K562 (cell line): ENCODE measurements at regions of chr2 and their contacts with region 1.

Region 1: DNA sequence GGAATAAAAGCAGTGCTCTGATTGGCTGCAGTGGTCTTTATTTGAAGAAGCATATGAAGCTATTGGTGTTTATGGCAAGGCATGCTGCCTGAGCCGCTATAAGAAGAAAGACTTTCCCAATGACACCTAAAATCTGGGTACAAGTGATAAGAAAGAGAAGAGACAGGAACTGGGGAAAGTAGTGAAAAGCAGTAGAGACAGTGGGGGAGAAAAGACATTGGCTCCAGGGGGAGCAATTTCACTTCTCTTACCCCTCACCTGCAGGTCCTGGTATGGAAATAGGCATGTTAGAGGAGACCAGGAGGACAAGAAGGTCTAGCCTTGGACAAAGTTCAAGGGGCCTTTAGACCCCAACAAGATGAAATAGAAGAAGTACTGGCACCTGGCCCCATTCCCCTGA is 47.1 kb downstream of the PLCL1 start:
- DNase-seq: peak; percentile 31 to 72 (median 54)
- ATAC-seq: peak; percentile 89
- H3K4me3 ChIP-seq: no peak overlapping the region
- H3K27ac ChIP-seq: peak overlapping the region; percentile 20; the same call in 1 of the 3 replicates
- H3K4me1 ChIP-seq: peaks cover 0 to 30% of the 10 kb centered on the region in 2 experiments; a peak in 3 of 5 replicates
- H3K27me3 ChIP-seq: no peaks in the 10 kb centered on the region
- CTCF ChIP-seq: peak; percentile 43 to 64 (median 51)
- EP300 ChIP-seq: peak; percentile 40; the same call in 1 of the 2 replicates
- POLR2A ChIP-seq: no peak
- RAD21 ChIP-seq: peak; percentile 56 to 85

Region 2: GRCh38 chr2:197828464-197829135 is 22.9 kb before region 1 on chr2:
- CTCF ChIA-PET with region 1: no interaction called
- POLR2A ChIA-PET with region 1: no interaction called
- in situ Hi-C with region 1: no loop called
- intact Hi-C with region 1: no loop called
- DNase-seq: no peak
- ATAC-seq: no peak
- H3K4me3 ChIP-seq: no peak overlapping the region
- H3K27ac ChIP-seq: no peak overlapping the region
- H3K4me1 ChIP-seq: no peaks in the 10 kb centered on the region; a peak in 1 of 5 replicates
- H3K27me3 ChIP-seq: no peaks in the 10 kb centered on the region
- CTCF ChIP-seq: no peak
- EP300 ChIP-seq: no peak
- POLR2A ChIP-seq: no peak
- RAD21 ChIP-seq: no peak

Region 3: DNA sequence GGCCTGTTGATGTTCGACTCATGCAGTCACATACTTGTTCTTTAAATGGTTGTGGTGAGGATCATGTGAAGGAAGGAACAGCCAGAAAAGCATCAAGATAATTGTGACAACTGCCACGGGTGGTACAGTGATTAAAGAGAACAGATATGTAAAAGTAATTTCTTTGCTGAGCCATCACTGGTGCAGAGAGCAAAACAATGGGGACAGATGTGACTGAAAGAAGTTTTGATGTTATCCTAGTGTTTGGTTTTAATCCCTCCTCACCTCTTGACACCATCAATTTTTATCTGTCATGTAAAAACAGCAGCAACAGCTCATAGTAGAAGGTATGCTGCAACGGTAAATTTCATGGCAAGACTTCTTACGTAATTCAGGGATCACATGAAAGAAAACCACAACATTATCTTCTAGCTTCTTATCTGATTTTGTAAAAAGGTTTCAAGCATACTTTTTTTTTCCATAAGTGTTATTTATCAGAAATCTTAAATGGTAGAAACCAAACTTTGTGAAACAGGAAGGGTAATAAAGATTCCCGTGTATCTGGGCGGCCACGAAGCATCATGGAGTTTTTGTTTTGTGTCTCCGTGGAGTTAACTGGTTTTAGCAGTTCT is 18.2 kb after region 1 on chr2:
- CTCF ChIA-PET with region 1: no interaction called
- POLR2A ChIA-PET with region 1: no interaction called
- in situ Hi-C with region 1: no loop called
- intact Hi-C with region 1: no loop called
- DNase-seq: peak in 1 of 4 experiments; percentile 42
- ATAC-seq: peak; percentile 13; the same call in 2 of the 3 replicates
- H3K4me3 ChIP-seq: no peak overlapping the region
- H3K27ac ChIP-seq: peak overlapping the region; percentile 55; the same call in 1 of the 3 replicates
- H3K4me1 ChIP-seq: peaks cover 10 to 49% of the 10 kb centered on the region in 2 experiments
- H3K27me3 ChIP-seq: no peaks in the 10 kb centered on the region
- CTCF ChIP-seq: no peak
- EP300 ChIP-seq: peak; percentile 67
- POLR2A ChIP-seq: no peak
- RAD21 ChIP-seq: no peak

Region 4: DNA sequence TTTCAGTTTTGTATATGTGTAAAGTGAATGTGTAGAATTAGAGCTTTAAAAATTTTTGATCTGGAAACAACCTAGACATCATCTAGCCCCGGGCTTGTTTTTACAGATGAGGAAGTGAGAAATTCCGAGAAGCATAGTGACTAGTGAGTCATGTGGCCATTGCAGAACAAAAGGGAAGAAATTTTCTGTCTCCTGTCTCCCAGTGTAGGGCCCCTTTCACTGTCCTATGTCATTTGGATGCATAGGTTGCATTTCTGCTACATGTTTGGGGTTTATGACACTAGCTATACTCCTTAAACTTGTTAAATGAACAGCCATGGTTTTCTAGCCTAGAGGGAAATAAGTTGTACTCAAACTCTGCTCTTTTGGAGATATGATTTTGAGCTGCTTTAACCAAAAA is 37.6 kb after region 1 on chr2:
- CTCF ChIA-PET with region 1: no interaction called
- POLR2A ChIA-PET with region 1: interaction called, 3 read pairs
- in situ Hi-C with region 1: no loop called
- intact Hi-C with region 1: loop called (anchors 1 kb)
- DNase-seq: peak in 3 of 4 experiments; percentile 21 to 77 (median 50)
- ATAC-seq: peak; percentile 79
- H3K4me3 ChIP-seq: no peak overlapping the region
- H3K27ac ChIP-seq: peak overlapping the region; percentile 84
- H3K4me1 ChIP-seq: peaks cover 4 to 37% of the 10 kb centered on the region in 2 experiments; a peak in 3 of 5 replicates
- H3K27me3 ChIP-seq: no peaks in the 10 kb centered on the region
- CTCF ChIP-seq: no peak
- EP300 ChIP-seq: peak; percentile 49; the same call in 1 of the 2 replicates
- POLR2A ChIP-seq: 0 out of 2 replicates have a peak, but pooled peaks have one; percentile 29
- RAD21 ChIP-seq: no peak

Region 5: DNA sequence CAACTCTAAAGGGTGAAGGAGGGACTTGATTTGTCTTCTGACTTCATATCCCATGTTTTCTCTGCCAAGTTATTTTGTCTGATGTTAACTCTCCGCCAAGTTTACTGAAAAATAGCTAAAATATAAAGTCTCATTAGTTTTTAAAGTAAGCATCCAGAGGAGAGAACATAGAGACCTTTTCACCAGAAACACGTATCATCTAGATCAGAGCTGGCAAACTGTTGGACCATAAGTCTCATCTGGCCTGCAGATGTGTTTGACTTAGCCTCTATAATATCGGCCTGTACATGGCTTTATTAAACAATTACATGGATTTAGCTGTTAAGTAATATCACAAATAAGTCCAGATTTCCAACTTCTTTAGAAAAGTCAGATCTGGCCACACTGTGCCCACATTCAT is 135.5 kb after region 1 on chr2:
- CTCF ChIA-PET with region 1: no interaction called
- POLR2A ChIA-PET with region 1: no interaction called
- in situ Hi-C with region 1: no loop called
- intact Hi-C with region 1: loop called (anchors 5 kb)
- DNase-seq: no peak
- ATAC-seq: no peak
- H3K4me3 ChIP-seq: no peak overlapping the region
- H3K27ac ChIP-seq: no peak overlapping the region
- H3K4me1 ChIP-seq: peaks cover 0 to 15% of the 10 kb centered on the region in 2 experiments; a peak in 2 of 5 replicates
- H3K27me3 ChIP-seq: no peaks in the 10 kb centered on the region
- CTCF ChIP-seq: no peak
- EP300 ChIP-seq: no peak
- POLR2A ChIP-seq: no peak
- RAD21 ChIP-seq: no peak

Region 6: DNA sequence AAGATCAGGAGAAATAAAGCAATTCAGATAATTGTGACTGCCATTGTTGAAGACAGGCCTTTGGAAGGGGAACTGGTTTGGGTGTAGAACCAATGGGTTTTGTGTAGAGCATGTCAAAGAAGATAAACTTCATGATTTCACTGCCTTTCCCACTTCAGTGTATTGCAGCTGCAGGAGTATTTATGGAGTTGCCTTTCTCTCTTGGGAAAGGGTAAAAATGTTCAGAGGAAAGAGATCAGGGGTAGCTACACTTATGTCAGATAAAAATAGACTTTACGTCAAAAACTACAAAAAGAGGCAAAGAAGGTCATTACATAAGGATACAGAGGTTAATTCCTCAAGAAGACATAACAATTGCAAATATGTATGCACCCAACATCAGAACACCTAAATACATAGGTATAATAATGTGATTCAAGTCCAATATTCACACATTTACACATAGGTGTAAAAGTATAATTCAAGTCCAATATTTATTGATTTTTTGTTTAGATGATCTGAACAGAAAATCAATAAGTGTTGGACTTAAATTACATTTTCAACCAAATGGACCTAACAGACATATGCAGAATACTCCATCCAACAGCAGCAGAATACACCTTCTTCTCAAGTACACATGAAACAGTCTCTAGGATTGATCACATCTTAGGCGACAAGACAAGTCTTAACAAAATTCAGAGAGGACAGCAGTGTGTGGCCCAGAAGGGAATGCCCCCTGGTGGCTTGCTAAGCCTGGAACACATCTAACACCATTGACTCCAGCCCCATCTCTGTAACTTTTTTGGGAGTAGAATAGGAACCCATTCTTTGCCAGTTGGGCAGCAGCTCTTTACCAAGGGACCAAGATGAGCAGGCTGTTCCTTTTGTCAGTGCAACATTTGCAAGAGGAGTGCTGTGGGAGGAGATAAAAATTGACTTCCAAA is 202.6 kb after region 1 on chr2:
- CTCF ChIA-PET with region 1: interaction called, 3 read pairs
- POLR2A ChIA-PET with region 1: no interaction called
- in situ Hi-C with region 1: no loop called
- intact Hi-C with region 1: loop called (anchors 2 kb)
- DNase-seq: peak; percentile 21 to 72 (median 48)
- ATAC-seq: peak; percentile 96
- H3K4me3 ChIP-seq: no peak overlapping the region
- H3K27ac ChIP-seq: no peak overlapping the region
- H3K4me1 ChIP-seq: peaks cover 3 to 8% of the 10 kb centered on the region in 2 experiments; a peak in 4 of 5 replicates
- H3K27me3 ChIP-seq: no peaks in the 10 kb centered on the region
- CTCF ChIP-seq: peak; percentile 59 to 66 (median 61)
- EP300 ChIP-seq: no peak
- POLR2A ChIP-seq: no peak
- RAD21 ChIP-seq: peak; percentile 62 to 76

Region 7: GRCh38 chr2:198127627-198128026 is 276.2 kb after region 1 on chr2:
- CTCF ChIA-PET with region 1: interaction called, 4 read pairs
- POLR2A ChIA-PET with region 1: no interaction called
- in situ Hi-C with region 1: no loop called
- intact Hi-C with region 1: loop called (anchors 1 kb)
- DNase-seq: peak; percentile 28 to 72 (median 46)
- ATAC-seq: peak; percentile 87
- H3K4me3 ChIP-seq: no peak overlapping the region
- H3K27ac ChIP-seq: no peak overlapping the region
- H3K4me1 ChIP-seq: peaks cover 0 to 3% of the 10 kb centered on the region in 2 experiments; a peak in 2 of 5 replicates
- H3K27me3 ChIP-seq: no peaks in the 10 kb centered on the region
- CTCF ChIP-seq: peak; percentile 52 to 60 (median 53)
- EP300 ChIP-seq: no peak
- POLR2A ChIP-seq: no peak
- RAD21 ChIP-seq: peak; percentile 42 to 75

Region 8: DNA sequence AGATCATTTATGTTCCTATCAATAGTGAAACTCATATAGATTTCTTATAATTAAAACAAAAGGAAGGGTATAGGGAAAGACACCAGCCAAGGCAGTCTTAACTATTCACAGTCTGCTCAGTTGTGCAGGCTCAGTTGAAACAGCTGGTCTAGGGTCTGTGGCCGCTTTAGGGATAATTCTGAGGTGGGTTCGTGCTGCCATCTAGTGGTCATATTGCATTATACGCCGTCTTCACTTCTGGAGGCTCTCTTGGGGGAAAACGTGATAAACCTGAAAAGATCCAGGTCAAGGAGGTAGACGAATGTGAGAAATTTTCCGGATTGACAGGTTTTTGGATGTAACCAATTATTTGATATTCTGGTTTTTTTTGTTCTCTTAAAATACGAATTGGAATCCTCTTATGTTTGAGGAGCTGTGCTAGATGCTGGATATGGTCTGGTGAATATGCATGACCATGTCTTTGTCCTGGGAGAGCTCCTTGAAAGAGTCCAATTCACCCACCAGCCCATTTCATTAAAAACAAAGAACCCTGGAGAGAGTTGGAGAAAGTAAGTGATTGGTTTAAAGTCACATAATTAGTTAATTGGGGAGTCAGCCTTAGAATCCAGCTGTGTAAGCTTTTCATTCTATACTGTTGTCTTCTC is 445.3 kb after region 1 on chr2:
- CTCF ChIA-PET with region 1: no interaction called
- POLR2A ChIA-PET with region 1: no interaction called
- in situ Hi-C with region 1: no loop called
- intact Hi-C with region 1: loop called (anchors 2 kb)
- DNase-seq: peak; percentile 53 to 76 (median 60)
- ATAC-seq: peak; percentile 96
- H3K4me3 ChIP-seq: no peak overlapping the region
- H3K27ac ChIP-seq: no peak overlapping the region
- H3K4me1 ChIP-seq: peaks cover 0 to 3% of the 10 kb centered on the region in 2 experiments; a peak in 2 of 5 replicates
- H3K27me3 ChIP-seq: peaks cover 0 to 12% of the 10 kb centered on the region in 2 experiments; a peak in 2 of 5 replicates
- CTCF ChIP-seq: peak; percentile 63 to 70 (median 64)
- EP300 ChIP-seq: no peak
- POLR2A ChIP-seq: no peak
- RAD21 ChIP-seq: peak; percentile 80 to 83